Activated CD4-positive, alpha-beta T cell treated with anti-CD3 and anti-CD28 coated beads, Interleukin-2, amount 10 ng/mL, durations not matched to agents 7 days and 5 days (primary cell): ENCODE measurements at regions of chr6 and their contacts with region 1.

Region 1: DNA sequence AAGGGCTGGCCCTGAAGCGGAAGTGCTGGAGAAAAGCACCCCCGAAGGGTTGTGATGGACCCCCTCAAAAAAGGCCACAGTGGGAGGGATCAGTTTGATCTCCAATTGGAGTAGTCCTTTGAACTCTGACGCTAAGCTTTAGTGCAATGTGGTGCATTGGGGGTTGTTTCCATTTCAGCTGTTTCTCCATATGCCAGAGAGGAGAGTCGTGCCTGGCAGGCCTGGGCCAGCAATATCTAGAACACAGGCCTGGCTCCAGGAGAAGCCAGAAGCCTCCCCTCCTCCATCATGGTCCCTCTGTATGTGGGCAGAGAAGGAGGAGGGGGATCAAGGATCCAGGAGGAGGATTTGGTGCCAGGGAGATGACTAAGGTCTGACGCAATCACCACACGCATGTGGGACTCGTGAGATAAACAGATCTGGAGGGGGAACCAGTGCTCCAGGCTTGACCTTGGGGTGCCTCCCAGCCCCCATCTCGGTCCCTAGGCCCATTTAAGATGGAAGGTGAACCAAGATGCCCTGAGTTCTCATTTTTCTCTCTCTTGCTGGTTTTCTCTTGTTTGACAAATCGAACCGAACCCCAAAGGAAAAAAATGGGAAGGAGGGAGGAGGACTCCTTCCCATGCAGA is 517.4 kb upstream of the JARID2 start:
- DNase-seq: no peak
- H3K4me3 Mint-ChIP-seq: no peak overlapping the region
- H3K27ac Mint-ChIP-seq: no peak overlapping the region
- H3K4me1 Mint-ChIP-seq: peaks cover 51% of the 10 kb centered on the region
- H3K27me3 Mint-ChIP-seq: no peaks in the 10 kb centered on the region

Region 2: GRCh38 chr6:14711056-14711703 is 17.3 kb before region 1 on chr6:
- CTCF ChIA-PET with region 1: interaction called, 99 read pairs
- POLR2A ChIA-PET with region 1: no interaction called
- DNase-seq: peak; percentile 75
- H3K4me3 Mint-ChIP-seq: no peak overlapping the region
- H3K27ac Mint-ChIP-seq: peak overlapping the region; percentile 71
- H3K4me1 Mint-ChIP-seq: peaks cover 31% of the 10 kb centered on the region
- H3K27me3 Mint-ChIP-seq: no peaks in the 10 kb centered on the region

Region 3: DNA sequence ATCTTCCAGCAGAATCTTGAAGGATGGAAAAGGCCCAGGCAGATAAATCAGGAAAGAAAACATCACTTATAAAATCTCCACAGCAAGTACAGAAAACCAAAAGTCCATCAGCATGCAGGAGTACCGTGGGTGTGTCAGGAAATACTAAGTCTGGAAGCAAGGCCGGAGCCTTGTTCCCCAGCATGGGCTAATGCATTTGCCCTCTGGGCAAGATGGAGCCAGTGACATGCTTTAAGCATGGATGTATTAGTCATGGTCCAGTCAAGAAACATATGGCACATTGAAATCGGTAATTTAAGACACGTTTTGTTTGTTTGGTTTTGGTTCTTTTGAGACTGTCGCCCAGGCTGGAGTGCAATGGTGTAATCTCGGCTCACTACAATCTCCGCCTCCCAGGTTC is 11.3 kb after region 1 on chr6:
- CTCF ChIA-PET with region 1: interaction called, 10 read pairs
- POLR2A ChIA-PET with region 1: no interaction called
- DNase-seq: no peak
- H3K4me3 Mint-ChIP-seq: no peak overlapping the region
- H3K27ac Mint-ChIP-seq: no peak overlapping the region
- H3K4me1 Mint-ChIP-seq: peaks cover 74% of the 10 kb centered on the region
- H3K27me3 Mint-ChIP-seq: no peaks in the 10 kb centered on the region